Posterior cingulate gyrus (tissue), 11 donors: ENCODE measurements at regions of chr4 and their contacts with region 1.

Region 1: GRCh38 chr4:82629238-82630000 is 67.6 kb upstream of the TMEM150C start:
- DNase-seq: no peak

Region 2: DNA sequence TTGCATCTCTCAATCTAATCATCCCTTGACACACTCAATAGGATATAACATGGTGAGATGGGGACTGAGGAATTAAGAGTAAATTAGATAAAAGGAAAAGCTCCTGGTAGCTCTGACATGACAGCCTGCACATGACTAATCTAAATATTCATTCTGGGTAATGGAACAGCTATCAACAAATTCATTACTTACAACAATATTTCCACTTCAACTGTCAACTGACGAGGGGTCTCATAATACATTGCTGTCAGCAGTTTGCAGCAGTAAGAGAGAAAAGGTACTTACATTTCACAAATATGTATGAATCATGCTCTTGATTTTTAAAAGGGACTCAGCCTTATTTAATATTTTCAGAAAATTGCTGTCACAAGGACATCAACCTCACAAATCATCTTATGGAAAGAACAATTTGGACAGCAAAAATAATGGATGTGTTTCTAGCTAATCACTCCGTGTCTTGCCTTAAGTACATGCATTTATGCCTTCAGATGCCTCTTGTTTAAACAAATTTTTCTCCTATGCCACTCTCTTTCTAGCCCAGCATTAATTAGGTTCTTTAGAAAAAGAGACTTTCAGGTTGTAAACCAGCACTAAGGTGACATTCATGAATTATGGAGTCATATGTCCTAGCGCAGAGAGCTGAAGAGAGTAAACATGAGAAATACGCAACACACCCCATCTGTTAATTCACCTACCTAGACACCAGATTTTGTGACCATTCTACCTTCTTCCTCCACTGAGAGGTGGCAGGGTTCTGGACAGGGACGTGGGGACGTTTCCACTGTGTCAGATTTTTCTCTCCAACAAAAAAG is 32.0 kb after region 1 on chr4:
- intact Hi-C with region 1: loop called (anchors 5 kb)
- DNase-seq: no peak